Gastrocnemius medialis (tissue), 4 donors: ENCODE measurements at regions of chr17 and their contacts with region 1.

Region 1: GRCh38 chr17:74864866-74865395 is 5.2 kb upstream of the GRIN2C start:
- DNase-seq: peak; percentile 37 to 67
- ATAC-seq: peak; percentile 69 to 71
- H3K4me3 ChIP-seq: no peak overlapping the region
- H3K27ac ChIP-seq: no peak overlapping the region
- H3K4me1 ChIP-seq: peaks cover 0 to 20% of the 10 kb centered on the region in 2 donors
- H3K27me3 ChIP-seq: peaks cover 13 to 20% (median 20%) of the 10 kb centered on the region in 3 donors
- CTCF ChIP-seq: peak; percentile 90 to 96 (median 93)
- POLR2A ChIP-seq: no peak

Region 2: DNA sequence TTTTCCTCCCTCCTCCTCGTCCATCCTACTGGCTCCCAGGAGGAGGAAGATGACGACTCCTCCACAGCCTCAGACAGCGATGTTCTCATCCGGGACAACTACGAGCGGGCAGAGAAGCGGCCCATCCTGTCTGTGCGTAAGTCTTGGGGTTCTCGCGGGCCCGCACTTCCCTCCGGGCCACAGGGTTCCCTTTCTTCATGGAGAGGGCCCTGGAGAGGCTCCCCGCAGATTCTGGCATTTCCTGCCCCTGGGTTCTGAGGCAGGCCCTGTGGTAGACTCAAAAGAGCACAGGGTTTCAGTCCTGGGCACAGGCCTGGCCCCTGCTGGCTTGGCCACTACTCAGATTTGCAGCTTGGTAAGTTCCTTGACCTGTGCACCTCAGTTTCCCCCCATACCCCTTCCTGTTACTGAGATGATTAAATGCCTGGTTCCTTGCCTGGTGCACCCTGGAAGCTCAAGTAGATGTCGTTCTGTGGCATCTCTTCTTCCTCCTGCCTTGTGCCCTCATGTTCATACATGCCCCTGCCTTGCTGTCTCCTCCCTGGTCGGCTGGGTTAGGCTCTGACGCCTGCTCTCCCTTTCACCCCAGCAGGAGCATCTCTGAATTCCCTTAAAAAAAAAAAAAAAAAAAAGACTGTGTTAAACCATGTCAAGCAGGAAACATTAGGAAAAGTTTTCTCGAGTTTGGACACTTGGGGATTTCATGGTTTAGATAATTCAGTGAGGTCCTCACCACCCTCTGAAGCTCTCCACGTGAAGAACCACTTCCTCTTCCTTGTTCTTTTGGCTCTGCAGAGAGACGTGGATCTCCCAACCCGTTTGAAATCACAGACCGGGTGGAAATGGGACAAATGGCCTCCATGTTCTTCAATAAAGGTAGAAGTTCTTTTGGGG is 74.5 kb before region 1 on chr17:
- in situ Hi-C with region 1: loop called (anchors 5 to 10 kb)
- intact Hi-C with region 1: loop called (anchors 1 kb)
- DNase-seq: no peak
- ATAC-seq: no peak
- H3K4me3 ChIP-seq: no peak overlapping the region
- H3K27ac ChIP-seq: no peak overlapping the region
- H3K4me1 ChIP-seq: no peaks in the 10 kb centered on the region
- H3K27me3 ChIP-seq: no peaks in the 10 kb centered on the region
- CTCF ChIP-seq: no peak
- POLR2A ChIP-seq: no peak

Region 3: GRCh38 chr17:74798239-74798707 is 66.7 kb before region 1 on chr17:
- in situ Hi-C with region 1: loop called (anchors 5 to 10 kb)
- intact Hi-C with region 1: no loop called
- DNase-seq: no peak
- ATAC-seq: no peak
- H3K4me3 ChIP-seq: no peak overlapping the region
- H3K27ac ChIP-seq: no peak overlapping the region
- H3K4me1 ChIP-seq: no peaks in the 10 kb centered on the region
- H3K27me3 ChIP-seq: no peaks in the 10 kb centered on the region
- CTCF ChIP-seq: no peak
- POLR2A ChIP-seq: no peak

Region 4: GRCh38 chr17:74842599-74843351 is 22.2 kb before region 1 on chr17:
- in situ Hi-C with region 1: no loop called
- intact Hi-C with region 1: loop called (anchors 2 kb)
- DNase-seq: no peak
- ATAC-seq: peak; percentile 39 to 69
- H3K4me3 ChIP-seq: peak overlapping the region in 3 of 4 donors; percentile 19 to 34 (median 22)
- H3K27ac ChIP-seq: no peak overlapping the region
- H3K4me1 ChIP-seq: peaks cover 15 to 17% of the 10 kb centered on the region in 2 donors
- H3K27me3 ChIP-seq: peaks cover 0 to 20% (median 19%) of the 10 kb centered on the region in 3 donors
- CTCF ChIP-seq: peak; percentile 35 to 63 (median 40)
- POLR2A ChIP-seq: no peak